Heart left ventricle (tissue), 16 donors: ENCODE measurements at regions of chr14 and their contacts with region 1.

Region 1: DNA sequence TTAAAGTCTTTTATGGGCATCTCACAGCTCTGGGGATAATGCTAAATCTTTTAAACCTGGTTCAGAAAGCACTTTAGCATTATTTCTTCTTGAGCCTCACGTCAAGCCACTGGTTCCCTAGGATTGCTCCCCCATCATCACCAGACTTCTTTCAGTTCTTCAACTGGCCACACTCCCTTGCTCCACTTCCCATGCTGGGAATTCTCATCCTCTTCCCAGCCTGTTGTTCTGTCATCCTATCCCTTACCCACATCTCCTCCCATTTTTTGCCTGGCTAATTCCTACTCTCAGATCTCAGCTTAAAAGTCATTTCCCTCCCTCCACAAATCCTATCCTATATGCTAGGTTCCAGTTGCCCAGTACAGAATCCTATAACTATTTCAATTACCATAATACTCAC is 14.4 kb downstream of the FERMT2 start:
- DNase-seq: no peak
- ATAC-seq: no peak
- H3K4me3 ChIP-seq: no peak overlapping the region
- H3K27ac ChIP-seq: no peak overlapping the region
- H3K4me1 ChIP-seq: peaks cover 0 to 95% (median 56%) of the 10 kb centered on the region in 12 donors
- H3K27me3 ChIP-seq: no peaks in the 10 kb centered on the region
- CTCF ChIP-seq: no peak
- POLR2A ChIP-seq: no peak

Region 2: DNA sequence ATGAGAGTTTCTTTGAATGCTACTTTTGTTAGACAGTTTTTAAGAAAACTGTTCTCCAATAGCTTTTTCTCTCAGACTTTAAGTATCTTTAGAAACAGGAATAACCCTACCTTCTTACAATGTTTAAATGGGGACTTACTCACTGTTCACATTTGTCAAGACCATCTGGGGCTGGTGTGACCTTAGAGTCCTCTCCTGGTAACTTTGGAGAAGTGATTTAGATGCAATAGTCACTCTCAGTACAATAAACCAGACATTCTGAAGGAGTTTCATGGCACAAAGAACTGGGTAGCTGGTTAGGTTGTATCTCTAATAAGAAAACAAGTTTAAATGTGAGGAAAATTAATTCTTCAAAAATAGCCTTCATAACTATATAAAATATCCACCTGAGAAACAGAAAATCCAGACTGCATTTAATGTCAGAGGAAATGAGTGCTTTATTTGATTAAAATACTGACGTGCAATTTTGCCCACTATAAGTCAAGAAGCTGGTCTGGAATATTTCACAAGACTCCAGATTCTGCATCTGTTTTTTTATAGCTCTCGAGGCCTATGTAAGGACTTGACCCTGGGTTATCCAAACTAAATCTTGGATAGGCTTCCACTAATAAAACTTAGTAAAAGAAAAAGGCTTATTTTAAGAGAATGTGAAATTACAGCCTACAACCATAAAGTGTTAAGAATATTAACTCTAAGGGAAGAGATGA is 513.6 kb before region 1 on chr14:
- intact Hi-C with region 1: no loop called
- DNase-seq: no peak
- ATAC-seq: no peak
- H3K4me3 ChIP-seq: no peak overlapping the region
- H3K27ac ChIP-seq: no peak overlapping the region
- H3K4me1 ChIP-seq: no peaks in the 10 kb centered on the region
- H3K27me3 ChIP-seq: no peaks in the 10 kb centered on the region
- CTCF ChIP-seq: no peak
- POLR2A ChIP-seq: no peak

Region 3: DNA sequence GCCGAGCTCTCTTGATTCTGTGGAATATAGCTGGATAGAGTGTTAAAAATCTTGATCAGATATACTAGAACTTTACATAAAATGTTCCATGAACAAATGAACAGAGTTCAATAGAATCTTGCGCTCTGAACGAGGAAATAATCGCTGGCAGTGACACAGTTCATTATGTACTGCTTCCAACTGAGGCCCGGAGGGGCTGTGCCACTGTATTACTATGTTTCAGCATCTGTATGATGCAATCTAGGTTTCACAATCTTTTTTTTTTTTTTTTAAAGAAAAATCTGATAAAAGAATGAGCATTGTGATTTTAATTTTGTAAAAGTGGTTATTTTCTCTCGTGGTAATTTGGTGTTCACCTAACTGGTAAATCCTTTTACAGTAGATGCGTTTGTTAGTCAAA is 62.7 kb before region 1 on chr14:
- intact Hi-C with region 1: loop called in 2 of 10 experiments (anchors 5 to 10 kb)
- DNase-seq: no peak
- ATAC-seq: peak in 2 of 4 donors; percentile 44 to 47
- H3K4me3 ChIP-seq: no peak overlapping the region
- H3K27ac ChIP-seq: no peak overlapping the region
- H3K4me1 ChIP-seq: peaks cover 0 to 32% (median 17%) of the 10 kb centered on the region in 12 donors
- H3K27me3 ChIP-seq: no peaks in the 10 kb centered on the region
- CTCF ChIP-seq: no peak
- POLR2A ChIP-seq: no peak

Region 4: GRCh38 chr14:53054457-53054856 is 118.0 kb after region 1 on chr14:
- intact Hi-C with region 1: no loop called
- DNase-seq: no peak
- ATAC-seq: peak; percentile 50 to 73 (median 54)
- H3K4me3 ChIP-seq: no peak overlapping the region
- H3K27ac ChIP-seq: peak overlapping the region in 3 of 12 donors; percentile 8 to 9 (median 8)
- H3K4me1 ChIP-seq: peaks cover 0 to 7% (median 0%) of the 10 kb centered on the region in 12 donors
- H3K27me3 ChIP-seq: no peaks in the 10 kb centered on the region
- CTCF ChIP-seq: no peak
- POLR2A ChIP-seq: no peak